Breast epithelium (tissue), 4 donors: ENCODE measurements at regions of chr1 and their contacts with region 1.

Region 1: GRCh38 chr1:204080163-204080903 is 7.4 kb downstream of the SOX13 start:
- DNase-seq: peak; percentile 91 to 97
- H3K4me3 ChIP-seq: peak overlapping the region in 2 of 3 donors; percentile 21 to 44
- H3K27ac ChIP-seq: peak overlapping the region; percentile 92
- H3K4me1 ChIP-seq: peaks cover 25 to 51% of the 10 kb centered on the region in 2 donors
- H3K27me3 ChIP-seq: no peaks in the 10 kb centered on the region
- CTCF ChIP-seq: no peak
- POLR2A ChIP-seq: no peak

Region 2: GRCh38 chr1:203906932-203907331 is 173.4 kb before region 1 on chr1:
- intact Hi-C with region 1: no loop called
- DNase-seq: no peak
- H3K4me3 ChIP-seq: no peak overlapping the region
- H3K27ac ChIP-seq: no peak overlapping the region
- H3K4me1 ChIP-seq: no peaks in the 10 kb centered on the region
- H3K27me3 ChIP-seq: no peaks in the 10 kb centered on the region
- CTCF ChIP-seq: no peak
- POLR2A ChIP-seq: no peak

Region 3: GRCh38 chr1:204051258-204051657 is 29.1 kb before region 1 on chr1:
- intact Hi-C with region 1: no loop called
- DNase-seq: no peak
- H3K4me3 ChIP-seq: no peak overlapping the region
- H3K27ac ChIP-seq: no peak overlapping the region
- H3K4me1 ChIP-seq: no peaks in the 10 kb centered on the region
- H3K27me3 ChIP-seq: no peaks in the 10 kb centered on the region
- CTCF ChIP-seq: no peak
- POLR2A ChIP-seq: no peak

Region 4: GRCh38 chr1:204110889-204111633 is 30.7 kb after region 1 on chr1:
- intact Hi-C with region 1: loop called (anchors 2 kb)
- DNase-seq: no peak
- H3K4me3 ChIP-seq: no peak overlapping the region
- H3K27ac ChIP-seq: no peak overlapping the region
- H3K4me1 ChIP-seq: peaks cover 0 to 4% of the 10 kb centered on the region in 2 donors
- H3K27me3 ChIP-seq: no peaks in the 10 kb centered on the region
- CTCF ChIP-seq: no peak
- POLR2A ChIP-seq: no peak

Region 5: DNA sequence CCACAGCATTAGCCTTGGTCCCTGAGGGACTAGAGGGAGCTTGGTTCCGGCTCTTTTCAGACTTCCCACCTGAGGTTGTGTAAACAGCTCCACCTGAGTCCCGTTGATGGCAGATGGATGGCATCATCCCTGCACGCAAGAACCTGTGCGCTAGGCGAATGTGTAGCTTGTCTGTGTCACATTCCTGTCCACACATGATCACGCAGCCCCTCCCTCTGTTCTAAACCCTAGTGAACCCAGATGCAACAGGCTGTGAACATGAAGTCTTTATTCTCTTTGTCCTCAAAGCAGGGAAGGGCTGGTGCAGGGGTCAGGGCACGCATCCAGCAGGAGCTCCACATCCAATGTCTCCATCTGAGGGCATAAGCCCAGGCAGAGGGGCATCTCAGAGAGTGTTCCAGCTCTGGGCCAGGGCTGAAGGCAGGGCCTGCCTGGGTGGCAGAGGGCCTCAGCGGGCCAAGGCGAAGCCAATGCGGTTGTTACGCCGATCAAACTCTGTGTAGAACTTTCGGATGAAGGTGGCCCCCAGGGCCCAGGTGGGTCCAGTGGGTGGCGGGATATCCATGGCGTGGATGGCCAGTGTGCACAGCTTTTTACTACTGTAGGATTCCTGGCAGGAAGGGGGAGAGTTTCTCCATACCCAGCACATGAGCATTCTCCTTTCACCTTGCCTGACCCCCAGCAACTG is 74.4 kb after region 1 on chr1:
- intact Hi-C with region 1: loop called (anchors 2 kb)
- DNase-seq: no peak
- H3K4me3 ChIP-seq: no peak overlapping the region
- H3K27ac ChIP-seq: no peak overlapping the region
- H3K4me1 ChIP-seq: peaks cover 5 to 10% of the 10 kb centered on the region in 2 donors
- H3K27me3 ChIP-seq: no peaks in the 10 kb centered on the region
- CTCF ChIP-seq: no peak
- POLR2A ChIP-seq: no peak

Region 6: DNA sequence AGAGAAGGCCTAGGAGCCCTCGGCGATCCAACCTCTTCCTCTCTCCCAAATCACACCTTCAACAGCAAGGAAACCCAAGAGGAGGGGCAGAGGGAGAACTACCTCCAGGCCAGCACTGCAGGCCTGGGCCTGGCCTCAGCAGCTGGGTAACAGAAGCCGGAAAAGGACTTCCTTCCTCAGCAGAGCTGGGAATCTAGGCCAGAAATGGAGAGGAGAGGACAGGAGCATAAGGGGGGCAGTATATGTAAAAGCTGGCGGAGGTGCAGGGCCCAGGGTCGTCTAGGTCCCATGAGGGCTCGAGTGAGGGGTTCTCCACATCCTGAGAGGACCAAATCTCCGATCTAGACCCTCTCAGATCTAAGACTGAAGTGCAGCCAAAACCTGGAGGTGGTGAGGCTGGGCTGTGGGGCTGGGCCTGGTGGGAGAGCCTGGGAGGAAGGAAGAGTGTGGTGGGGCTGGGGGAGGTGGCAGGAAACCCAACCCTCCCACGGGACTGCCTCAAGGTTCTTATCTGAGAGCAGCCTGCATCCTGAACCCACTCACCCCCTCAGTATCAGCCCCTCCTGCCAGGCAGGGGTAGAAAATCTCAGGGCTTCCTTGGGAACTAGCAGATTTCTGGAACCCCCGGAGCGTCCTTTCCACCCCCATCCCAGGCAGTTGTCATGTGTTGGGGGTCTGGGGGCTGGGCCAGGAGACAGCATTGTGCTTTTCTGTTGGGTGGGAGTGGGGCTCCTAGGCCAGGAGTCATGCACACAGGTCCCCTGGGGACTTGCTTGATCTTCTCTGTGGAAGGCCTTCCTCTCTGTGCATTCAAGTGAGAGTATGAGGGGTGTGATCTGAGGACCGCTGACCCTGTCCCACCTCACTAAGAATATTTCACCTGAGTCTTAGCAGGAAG is 381.2 kb after region 1 on chr1:
- intact Hi-C with region 1: loop called (anchors 5 kb)
- DNase-seq: no peak
- H3K4me3 ChIP-seq: no peak overlapping the region
- H3K27ac ChIP-seq: peak overlapping the region; percentile 9 to 53
- H3K4me1 ChIP-seq: peaks cover 4 to 8% of the 10 kb centered on the region in 2 donors
- H3K27me3 ChIP-seq: no peaks in the 10 kb centered on the region
- CTCF ChIP-seq: no peak
- POLR2A ChIP-seq: no peak